ENCODE measurements at regions of chr14 and their contacts with region 1.

Region 1: GRCh38 chr14:102917469-102918211 is 4.8 kb upstream of the AMN start:
- DNase-seq: peak; percentile 88

Region 2: GRCh38 chr14:102200690-102201352 is 716.8 kb before region 1 on chr14:
- intact Hi-C with region 1: no loop called
- DNase-seq: no peak

Region 3: DNA sequence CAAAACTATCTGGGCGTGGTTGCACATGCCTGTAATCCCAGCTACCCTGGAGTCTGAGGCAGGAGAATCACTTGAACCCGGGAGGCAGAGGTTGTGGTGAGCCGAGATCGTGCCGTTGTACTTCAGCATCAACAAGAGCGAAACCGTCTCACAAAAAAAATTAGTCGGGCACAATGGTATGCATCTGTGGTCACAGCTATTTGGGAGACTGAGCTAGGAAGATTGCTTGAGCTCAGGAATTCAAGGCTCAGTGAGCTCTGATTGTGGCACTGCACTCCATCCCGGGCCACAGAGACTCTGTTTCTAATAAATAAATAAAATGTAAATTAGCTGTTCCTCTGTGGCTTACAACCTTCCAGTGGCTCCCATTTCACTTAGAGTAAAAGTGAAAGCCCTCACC is 297.2 kb before region 1 on chr14:
- intact Hi-C with region 1: loop called in 1 of 2 experiments (anchors 1 kb)
- DNase-seq: no peak

Region 4: DNA sequence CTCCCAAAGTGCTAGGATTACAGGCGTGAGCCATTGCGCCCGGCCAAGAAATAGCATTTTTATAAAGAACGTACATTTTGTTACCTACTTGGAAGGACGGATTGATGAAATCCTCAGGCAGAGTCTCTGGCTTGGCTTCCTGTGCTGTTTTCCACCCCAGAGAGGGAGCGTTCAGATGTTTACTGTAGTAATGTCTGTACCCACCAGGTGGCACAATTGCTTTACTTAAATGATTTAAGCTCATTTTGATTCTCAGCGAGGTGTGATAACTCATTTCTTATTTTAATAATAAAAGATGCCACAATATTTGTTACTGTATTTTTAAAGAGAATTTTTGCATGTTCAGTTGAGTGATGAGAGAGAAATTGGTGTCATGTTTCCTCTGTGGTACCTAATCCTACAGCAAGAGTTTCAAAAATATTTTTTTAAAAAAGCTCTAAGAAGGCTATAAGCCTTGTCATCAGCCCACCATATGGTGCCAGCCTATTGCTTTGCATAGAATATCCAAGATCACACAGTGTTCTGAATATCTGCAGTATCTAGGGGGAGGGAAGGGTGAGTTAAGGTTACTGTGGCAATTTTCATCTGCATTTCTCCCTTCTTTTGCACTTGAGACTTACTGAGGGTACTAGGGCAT is 223.0 kb before region 1 on chr14:
- intact Hi-C with region 1: loop called in 1 of 2 experiments (anchors 10 kb)
- DNase-seq: no peak

Region 5: DNA sequence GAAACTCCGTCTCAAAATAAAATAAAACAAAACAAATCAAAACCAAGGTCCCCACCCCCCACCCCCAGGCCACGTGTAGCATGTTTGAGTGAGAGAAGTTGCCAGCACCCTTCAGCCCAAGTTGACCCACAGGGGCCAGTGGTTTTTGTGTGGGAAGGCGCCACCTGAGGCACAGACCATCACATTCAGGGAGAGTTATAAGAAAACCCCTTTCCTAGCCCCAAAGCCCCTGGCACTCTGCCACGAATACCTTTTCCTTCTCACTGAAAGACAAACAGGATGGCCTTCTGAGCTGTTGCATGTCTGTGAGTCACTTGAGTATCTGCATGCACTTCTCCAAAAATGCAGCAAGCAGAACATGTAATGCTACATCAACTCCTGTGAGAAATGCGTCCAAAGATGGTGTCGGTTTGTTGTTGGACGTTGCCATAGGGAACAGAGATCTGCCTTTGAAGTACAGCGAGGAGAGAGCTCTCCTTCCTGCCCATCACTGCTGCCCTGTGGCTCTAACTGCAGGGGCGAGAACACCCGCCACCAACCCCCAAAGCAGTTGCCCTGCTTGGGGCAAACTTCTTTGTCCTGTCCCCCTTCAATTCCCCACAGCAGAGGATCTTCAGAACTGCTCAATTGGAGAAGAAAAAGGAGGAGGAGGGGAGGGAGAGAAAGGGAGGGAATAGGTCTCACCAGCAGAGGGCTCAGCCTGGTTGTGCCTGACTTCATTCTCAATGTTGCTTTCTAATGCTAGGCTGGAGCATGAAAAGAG is 143.1 kb before region 1 on chr14:
- intact Hi-C with region 1: loop called in 1 of 2 experiments (anchors 10 kb)
- DNase-seq: no peak

Region 6: GRCh38 chr14:103169954-103170353 is 252.3 kb after region 1 on chr14:
- intact Hi-C with region 1: no loop called
- DNase-seq: no peak

Measured in posterior vena cava (tissue), 2 donors.